ENCODE measurements at regions of chr12 and their contacts with region 1.

Region 1: DNA sequence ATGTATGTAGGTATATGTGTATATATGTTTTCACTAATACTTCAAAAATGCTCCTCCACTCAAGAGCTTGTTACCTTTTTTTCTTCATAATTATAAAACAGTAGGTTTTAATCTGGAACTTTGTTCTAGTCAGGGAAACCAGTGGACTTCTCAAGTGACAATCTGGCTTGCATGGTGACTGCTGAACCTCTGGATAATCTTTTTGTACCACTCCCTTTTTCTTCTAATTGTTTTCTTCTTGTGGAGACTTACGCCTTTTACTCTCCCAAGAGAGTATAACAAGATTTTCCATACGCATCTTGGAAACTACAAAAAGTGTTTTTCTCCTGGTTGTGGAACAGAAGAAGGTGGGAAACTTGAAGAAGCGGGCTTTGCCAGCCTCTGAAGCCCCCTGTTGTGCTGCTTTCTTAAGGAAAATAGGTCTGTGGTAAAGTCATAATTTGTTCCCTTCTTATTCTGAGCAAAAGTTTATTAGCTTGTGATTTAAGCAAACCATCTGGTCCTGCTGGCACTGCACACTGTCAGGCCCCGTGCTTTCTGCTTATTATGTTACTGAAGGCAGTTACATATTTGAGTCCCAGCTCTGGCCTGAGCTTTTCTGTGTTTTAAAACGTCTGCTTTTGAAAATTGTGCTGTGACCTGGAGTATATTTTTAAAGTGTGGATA is 291.8 kb downstream of the ERC1 start:
- DNase-seq: no peak
- ATAC-seq: no peak
- H3K4me3 ChIP-seq: no peak overlapping the region
- H3K4me3 Mint-ChIP-seq: no peak overlapping the region
- H3K27ac ChIP-seq: no peak overlapping the region
- H3K27ac Mint-ChIP-seq: no peak overlapping the region
- H3K4me1 ChIP-seq: peaks cover 9% of the 10 kb centered on the region
- H3K4me1 Mint-ChIP-seq: peaks cover 16% of the 10 kb centered on the region
- H3K27me3 ChIP-seq: no peaks in the 10 kb centered on the region
- H3K27me3 Mint-ChIP-seq: no peaks in the 10 kb centered on the region
- CTCF ChIP-seq: no peak

Region 2: GRCh38 chr12:569803-570434 is 712.9 kb before region 1 on chr12:
- CTCF ChIA-PET with region 1: no interaction called
- POLR2A ChIA-PET with region 1: no interaction called
- intact Hi-C with region 1: loop called in 1 of 2 experiments (anchors 10 kb)
- DNase-seq: peak; percentile 74 to 93 (median 87)
- ATAC-seq: peak; percentile 98
- H3K4me3 ChIP-seq: peak overlapping the region; percentile 63 to 76
- H3K4me3 Mint-ChIP-seq: peak overlapping the region; percentile 86
- H3K27ac ChIP-seq: peak overlapping the region in 1 of 2 experiments; percentile 8
- H3K27ac Mint-ChIP-seq: peak overlapping the region; percentile 77
- H3K4me1 ChIP-seq: peaks cover 43% of the 10 kb centered on the region
- H3K4me1 Mint-ChIP-seq: peaks cover 45% of the 10 kb centered on the region
- H3K27me3 ChIP-seq: no peaks in the 10 kb centered on the region
- H3K27me3 Mint-ChIP-seq: no peaks in the 10 kb centered on the region
- CTCF ChIP-seq: peak; percentile 88

Region 3: DNA sequence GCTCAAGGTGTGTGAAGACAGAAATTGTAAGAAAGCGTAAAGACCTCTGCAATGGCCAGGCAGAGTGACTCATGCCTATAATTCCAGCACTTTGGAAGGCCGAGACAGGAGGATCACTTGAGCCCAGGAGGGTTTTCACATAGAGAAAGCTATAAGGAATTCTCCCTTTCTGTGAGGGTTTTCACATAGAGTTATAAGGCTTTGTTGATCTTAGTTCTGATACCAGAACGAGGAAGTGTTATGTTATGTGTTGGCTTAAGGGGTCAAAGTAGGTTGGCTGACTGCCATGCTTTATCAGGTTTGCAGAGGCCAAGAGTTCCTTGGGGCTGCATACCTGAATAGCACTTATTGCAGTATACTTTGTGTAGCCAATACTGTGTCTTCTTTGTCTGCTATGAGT is 152.6 kb before region 1 on chr12:
- CTCF ChIA-PET with region 1: no interaction called
- POLR2A ChIA-PET with region 1: no interaction called
- intact Hi-C with region 1: loop called in 1 of 2 experiments (anchors 5 kb)
- DNase-seq: peak in 2 of 9 experiments; percentile 7 to 12
- ATAC-seq: no peak
- H3K4me3 ChIP-seq: no peak overlapping the region
- H3K4me3 Mint-ChIP-seq: no peak overlapping the region
- H3K27ac ChIP-seq: no peak overlapping the region
- H3K27ac Mint-ChIP-seq: no peak overlapping the region
- H3K4me1 ChIP-seq: peaks cover 12% of the 10 kb centered on the region
- H3K4me1 Mint-ChIP-seq: peaks cover 41% of the 10 kb centered on the region
- H3K27me3 ChIP-seq: no peaks in the 10 kb centered on the region
- H3K27me3 Mint-ChIP-seq: no peaks in the 10 kb centered on the region
- CTCF ChIP-seq: no peak

Region 4: DNA sequence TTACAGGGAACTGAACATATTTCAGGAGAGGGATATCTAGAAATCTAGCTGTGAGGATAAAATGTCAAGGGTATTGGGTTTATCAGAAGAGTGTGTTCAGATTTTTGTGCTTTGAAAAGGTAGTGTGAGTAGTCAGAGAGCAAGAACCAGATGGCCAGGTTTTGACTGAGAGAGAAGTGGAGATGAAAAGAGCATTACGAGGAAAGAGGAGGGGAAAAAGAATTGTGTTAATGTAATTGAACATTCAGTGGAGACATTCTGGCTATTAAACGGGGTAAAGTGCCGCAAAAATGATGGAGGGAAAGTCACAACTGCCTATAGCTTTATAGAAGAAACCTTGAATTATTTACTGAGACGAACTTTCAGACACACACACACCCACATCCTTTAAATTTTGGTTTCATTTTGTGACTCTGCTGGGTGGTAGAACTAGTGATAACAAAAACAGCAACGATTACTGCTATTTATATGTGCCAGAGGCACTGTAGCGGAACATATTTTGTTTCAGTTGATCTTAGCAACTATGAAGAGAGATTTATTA is 78.2 kb before region 1 on chr12:
- CTCF ChIA-PET with region 1: no interaction called
- POLR2A ChIA-PET with region 1: no interaction called
- intact Hi-C with region 1: loop called in 1 of 2 experiments (anchors 5 kb)
- DNase-seq: peak in 2 of 9 experiments; percentile 39 to 59
- ATAC-seq: peak; percentile 95
- H3K4me3 ChIP-seq: peak overlapping the region; percentile 38 to 55
- H3K4me3 Mint-ChIP-seq: no peak overlapping the region
- H3K27ac ChIP-seq: peak overlapping the region; percentile 50 to 65
- H3K27ac Mint-ChIP-seq: no peak overlapping the region
- H3K4me1 ChIP-seq: peaks cover 9% of the 10 kb centered on the region
- H3K4me1 Mint-ChIP-seq: peaks cover 10% of the 10 kb centered on the region
- H3K27me3 ChIP-seq: no peaks in the 10 kb centered on the region
- H3K27me3 Mint-ChIP-seq: no peaks in the 10 kb centered on the region
- CTCF ChIP-seq: no peak

Region 5: DNA sequence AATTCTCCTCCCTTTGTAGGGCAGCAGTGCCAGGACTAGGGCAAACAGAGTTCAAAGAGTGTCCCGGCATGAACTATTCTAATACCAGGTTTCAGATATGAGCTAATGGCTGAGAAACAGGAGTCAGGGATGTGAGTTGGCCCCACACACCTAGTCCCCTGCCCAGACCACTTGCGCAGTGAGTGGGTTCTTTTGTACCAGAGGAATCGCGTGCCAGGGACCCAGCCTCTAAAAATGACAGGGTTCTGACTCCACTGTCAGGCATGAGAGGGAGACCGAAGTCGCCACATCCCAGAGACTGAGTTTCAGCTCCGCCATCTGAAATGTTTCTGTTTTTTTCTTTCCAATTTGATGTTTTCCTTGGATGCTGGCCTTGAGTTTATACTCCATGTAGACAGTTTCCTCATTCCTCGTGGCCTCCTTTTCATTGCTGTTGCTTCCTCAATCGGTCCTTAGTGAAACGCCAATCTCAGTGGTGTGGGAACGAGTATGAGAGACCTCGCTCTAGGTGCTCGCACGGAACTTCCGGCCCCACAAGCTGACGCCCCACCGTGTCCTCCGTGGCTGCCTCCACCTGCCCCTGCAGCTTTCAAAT is 280.1 kb after region 1 on chr12:
- CTCF ChIA-PET with region 1: no interaction called
- POLR2A ChIA-PET with region 1: no interaction called
- intact Hi-C with region 1: no loop called
- DNase-seq: no peak
- ATAC-seq: no peak
- H3K4me3 ChIP-seq: no peak overlapping the region
- H3K4me3 Mint-ChIP-seq: no peak overlapping the region
- H3K27ac ChIP-seq: no peak overlapping the region
- H3K27ac Mint-ChIP-seq: peak overlapping the region; percentile 45
- H3K4me1 ChIP-seq: no peaks in the 10 kb centered on the region
- H3K4me1 Mint-ChIP-seq: no peaks in the 10 kb centered on the region
- H3K27me3 ChIP-seq: no peaks in the 10 kb centered on the region
- H3K27me3 Mint-ChIP-seq: peaks cover 4% of the 10 kb centered on the region
- CTCF ChIP-seq: no peak

Region 6: DNA sequence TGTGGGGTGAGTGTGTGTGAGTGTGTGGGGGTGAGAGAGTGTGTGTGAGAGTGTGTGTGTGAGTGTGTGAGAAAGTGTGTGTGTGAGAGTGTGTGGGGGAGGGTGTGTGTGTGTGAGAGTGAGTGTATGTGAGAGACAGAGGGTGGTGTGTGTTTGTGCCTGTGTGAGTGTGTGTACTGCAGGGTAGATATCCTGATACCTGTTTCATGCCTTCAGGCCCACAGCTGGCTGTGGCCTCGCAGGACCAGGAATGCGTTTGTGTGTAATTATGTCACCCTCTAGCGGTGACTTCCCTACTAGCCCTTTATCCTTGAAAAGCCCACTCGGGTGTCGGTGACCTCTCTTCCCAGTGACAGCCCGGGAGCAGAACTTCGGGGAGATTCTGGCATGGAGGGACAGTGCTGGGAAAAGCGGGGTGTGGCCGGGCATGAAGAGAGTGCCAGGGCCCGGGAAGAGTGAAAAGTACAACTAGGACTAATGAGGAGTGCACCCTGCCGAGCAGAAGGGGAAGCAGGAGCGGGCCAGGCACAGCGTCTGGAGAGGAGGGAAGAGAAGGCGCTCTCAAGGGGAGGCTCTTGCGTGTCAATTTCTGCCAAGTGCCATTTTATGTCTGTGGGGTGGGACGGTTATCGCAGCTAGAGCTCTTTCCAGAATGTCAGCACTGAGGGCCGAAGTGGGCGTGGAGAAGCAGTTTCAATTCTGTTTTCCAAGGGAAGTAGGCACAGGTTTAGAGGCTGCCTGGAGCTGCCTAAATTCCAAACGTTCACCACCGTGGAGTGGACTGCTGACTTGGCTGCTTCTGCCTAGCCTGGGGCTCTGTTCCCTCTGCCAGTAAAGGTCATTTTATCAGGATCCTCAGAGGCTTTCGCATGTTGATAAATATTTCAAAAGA is 322.6 kb after region 1 on chr12:
- CTCF ChIA-PET with region 1: no interaction called
- POLR2A ChIA-PET with region 1: no interaction called
- intact Hi-C with region 1: loop called in 1 of 2 experiments (anchors 5 kb)
- DNase-seq: peak in 8 of 9 experiments; percentile 32 to 86 (median 64)
- ATAC-seq: peak; percentile 70
- H3K4me3 ChIP-seq: peak overlapping the region; percentile 36 to 37
- H3K4me3 Mint-ChIP-seq: peak overlapping the region; percentile 86
- H3K27ac ChIP-seq: no peak overlapping the region
- H3K27ac Mint-ChIP-seq: peak overlapping the region; percentile 24
- H3K4me1 ChIP-seq: peaks cover 23% of the 10 kb centered on the region
- H3K4me1 Mint-ChIP-seq: peaks cover 31% of the 10 kb centered on the region
- H3K27me3 ChIP-seq: no peaks in the 10 kb centered on the region
- H3K27me3 Mint-ChIP-seq: no peaks in the 10 kb centered on the region
- CTCF ChIP-seq: peak; percentile 64